Dorsolateral prefrontal cortex (tissue), 120 donors: ENCODE measurements at regions of chr3 and their contacts with region 1.

Region 1: DNA sequence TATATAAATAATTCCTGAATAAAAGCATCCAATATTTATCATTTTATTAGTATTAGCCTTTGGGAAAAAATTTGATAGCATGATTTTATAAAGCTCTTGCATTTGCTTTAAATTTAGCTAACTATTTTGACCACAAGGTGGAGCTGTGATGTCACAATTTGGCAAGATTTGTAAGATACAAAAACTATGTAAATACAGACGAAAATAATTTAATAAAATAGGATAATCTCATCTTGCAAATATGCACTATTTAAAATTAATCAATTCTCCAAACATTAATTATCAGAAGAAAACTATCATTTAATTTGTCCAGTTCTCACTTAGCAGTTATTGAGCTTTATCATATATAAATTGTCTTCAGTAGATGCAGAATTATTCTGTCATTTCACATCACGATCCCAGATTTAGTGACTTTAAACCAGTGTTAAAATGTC is 95.4 kb downstream of the PLOD2 start:
- DNase-seq: peak in 1 of 10 donors; percentile 29
- H3K4me3 ChIP-seq: no peak overlapping the region
- H3K27ac ChIP-seq: no peak overlapping the region
- H3K27me3 ChIP-seq: no peaks in the 10 kb centered on the region
- CTCF ChIP-seq: peak; percentile 74 to 99 (median 89)

Region 2: DNA sequence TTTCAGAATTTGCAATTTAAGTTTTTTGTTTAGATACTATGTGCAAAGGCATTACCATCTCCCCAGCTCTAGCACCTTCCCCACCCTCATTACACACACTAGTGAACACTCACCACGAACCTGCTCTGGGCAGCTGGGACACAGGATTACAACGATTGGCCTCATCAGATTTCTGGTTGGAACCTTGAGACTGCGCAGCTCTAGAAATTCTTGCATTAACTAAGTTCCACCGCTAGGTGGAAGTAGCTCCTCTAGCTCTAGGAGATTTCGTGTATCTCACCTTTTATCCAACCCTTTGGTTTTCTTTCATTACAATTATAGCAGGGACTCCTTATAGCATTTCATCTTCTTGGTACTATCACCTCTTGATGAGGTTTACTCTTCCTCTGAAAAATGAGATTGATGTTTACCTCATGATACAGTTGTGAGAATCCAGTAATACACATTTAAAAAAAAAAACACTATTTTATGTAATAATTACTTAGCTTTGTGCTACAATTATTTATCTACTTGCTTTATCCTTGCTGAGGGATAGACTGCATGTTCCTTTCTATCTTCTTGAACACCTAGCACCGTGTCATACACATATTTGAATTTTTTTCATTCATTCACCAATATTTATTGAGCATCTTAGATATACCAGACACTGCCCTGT is 124.1 kb after region 1 on chr3:
- intact Hi-C with region 1: loop called (anchors 2 to 5 kb)
- DNase-seq: peak in 2 of 10 donors; percentile 8 to 32
- H3K4me3 ChIP-seq: peak overlapping the region in 1 of 59 donors; percentile 5
- H3K27ac ChIP-seq: no peak overlapping the region
- H3K27me3 ChIP-seq: no peaks in the 10 kb centered on the region
- CTCF ChIP-seq: peak; percentile 66 to 89 (median 80)

Region 3: GRCh38 chr3:146326670-146327543 is 261.3 kb after region 1 on chr3:
- intact Hi-C with region 1: loop called in 1 of 2 experiments (anchors 5 kb)
- DNase-seq: peak in 1 of 10 donors; percentile 15
- H3K4me3 ChIP-seq: peak overlapping the region in 1 of 59 donors; percentile 19
- H3K27ac ChIP-seq: no peak overlapping the region
- H3K27me3 ChIP-seq: peaks cover 0 to 5% (median 0%) of the 10 kb centered on the region in 45 donors
- CTCF ChIP-seq: peak in 53 of 56 donors; percentile 32 to 85 (median 60)